ENCODE measurements at regions of chr12 and their contacts with region 1.

Region 1: GRCh38 chr12:111812881-111813741 is 28.9 kb upstream of the MAPKAPK5 start:
- DNase-seq: peak; percentile 89 to 90
- ATAC-seq: peak; percentile 95 to 96
- H3K4me3 ChIP-seq: no peak overlapping the region
- H3K27ac ChIP-seq: no peak overlapping the region
- H3K4me1 ChIP-seq: peaks cover 3% of the 10 kb centered on the region; the same call in 1 of the 3 replicates
- CTCF ChIP-seq: peak; percentile 87
- EP300 ChIP-seq: no peak
- POLR2A ChIP-seq: no peak
- RAD21 ChIP-seq: peak; percentile 85 to 91

Region 2: DNA sequence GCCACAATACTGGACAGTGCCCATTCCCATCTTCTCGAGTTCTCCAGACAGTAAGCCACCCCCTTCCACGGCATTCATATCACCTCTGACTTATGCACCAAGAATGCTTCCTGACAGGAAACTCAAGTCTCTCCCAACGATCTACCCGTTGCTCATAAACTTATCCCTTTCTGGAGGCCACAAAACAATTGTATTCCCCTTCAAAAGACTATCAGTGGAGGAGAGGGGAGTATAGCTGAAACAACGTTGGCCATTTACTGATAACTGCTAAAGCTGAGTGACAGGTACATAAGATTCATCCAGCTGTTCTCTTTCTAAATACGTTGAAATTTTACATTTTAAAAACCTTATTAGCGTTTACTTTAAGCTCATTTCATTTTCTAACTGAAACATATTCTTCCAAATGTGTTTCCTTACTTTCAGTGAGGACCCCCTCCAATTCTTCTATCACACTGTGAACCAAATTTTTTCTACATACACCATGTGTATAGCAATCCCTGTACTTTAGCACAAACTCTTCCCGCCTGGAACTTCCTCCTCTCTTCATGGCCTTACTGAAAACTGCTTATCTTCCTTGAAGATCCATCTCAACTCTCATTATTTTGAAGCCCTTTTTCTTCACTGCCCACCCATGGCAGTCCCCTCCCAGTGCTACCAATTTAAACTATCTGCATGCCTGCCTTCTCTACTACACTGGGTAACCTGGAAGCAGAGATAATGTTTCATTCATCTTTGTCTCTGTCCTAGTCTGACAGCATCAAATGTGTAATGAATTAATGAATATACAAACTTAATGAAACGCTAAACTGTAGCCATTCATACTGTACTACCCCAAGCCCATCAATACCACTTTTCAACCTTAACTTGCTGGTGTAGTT is 242.8 kb before region 1 on chr12:
- CTCF ChIA-PET with region 1: no interaction called
- POLR2A ChIA-PET with region 1: no interaction called
- DNase-seq: peak; percentile 52 to 74
- ATAC-seq: peak; percentile 86 to 92
- H3K4me3 ChIP-seq: no peak overlapping the region
- H3K27ac ChIP-seq: peak overlapping the region; percentile 40 to 62; a peak in 5 of 6 replicates
- H3K4me1 ChIP-seq: peaks cover 44% of the 10 kb centered on the region
- CTCF ChIP-seq: no peak
- EP300 ChIP-seq: no peak
- POLR2A ChIP-seq: no peak
- RAD21 ChIP-seq: no peak

Region 3: DNA sequence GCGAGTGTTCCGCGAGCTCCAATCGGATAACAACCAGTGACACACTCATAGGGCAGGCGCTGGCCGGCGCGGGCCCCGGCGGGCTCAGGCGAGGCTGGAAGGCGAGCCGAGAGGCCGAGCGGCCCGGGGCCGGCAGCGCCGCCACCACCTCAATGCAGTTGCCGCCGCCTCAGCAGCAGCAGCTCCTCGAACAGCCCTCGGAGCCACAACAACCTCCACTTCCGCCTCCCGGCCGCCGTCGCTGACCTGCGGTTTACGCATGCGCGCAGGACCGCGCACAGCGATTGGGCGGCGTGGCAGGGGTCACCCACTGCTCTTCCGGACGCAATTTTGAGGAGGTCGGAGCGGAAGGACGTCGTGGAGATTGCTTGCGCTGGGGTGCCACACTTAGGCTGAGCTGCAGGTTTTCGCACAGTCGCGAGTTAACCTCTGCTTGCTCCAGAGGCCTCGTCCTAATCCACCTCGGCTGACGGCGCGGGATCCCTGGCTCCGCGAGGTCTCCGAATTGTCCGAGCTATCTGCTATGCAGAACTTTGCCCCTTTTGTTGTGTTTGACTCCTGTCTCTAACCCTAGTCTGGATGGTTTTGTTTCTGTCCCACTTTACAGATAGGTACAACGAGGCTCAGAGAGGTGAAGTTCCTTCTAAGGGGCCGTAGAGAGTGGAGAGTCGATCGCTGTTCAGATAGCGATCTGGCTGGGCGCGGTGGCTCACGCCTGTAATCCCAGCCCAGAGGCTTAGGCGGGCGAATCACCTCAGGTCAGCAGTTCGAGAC is 127.2 kb before region 1 on chr12 and contains the starts of genes ACAD10 and BRAP:
- CTCF ChIA-PET with region 1: interaction called, 10 read pairs
- POLR2A ChIA-PET with region 1: interaction called, 7 read pairs
- DNase-seq: peak; percentile 96 to 97
- ATAC-seq: peak; percentile 93 to 96
- H3K4me3 ChIP-seq: peak within 1 kb of the TSS; percentile 89
- H3K27ac ChIP-seq: peak within 1 kb of the TSS; percentile 85 to 90
- H3K4me1 ChIP-seq: peaks cover 21% of the 10 kb centered on the region
- CTCF ChIP-seq: no peak
- EP300 ChIP-seq: no peak
- POLR2A ChIP-seq: peak; percentile 93
- RAD21 ChIP-seq: no peak
- polyA plus RNA-seq, gene ACAD10: 22.0 and 32.6 TPM in 2 replicates
- polyA plus RNA-seq, gene BRAP: 25.2 and 29.7 TPM in 2 replicates

Region 4: GRCh38 chr12:111747333-111747732 is 65.8 kb before region 1 on chr12:
- CTCF ChIA-PET with region 1: interaction called, 150 read pairs
- POLR2A ChIA-PET with region 1: no interaction called
- DNase-seq: no peak
- ATAC-seq: 0 out of 6 replicates have a peak, but pooled peaks of 1 of the 2 experiments have one; percentile 44
- H3K4me3 ChIP-seq: no peak overlapping the region
- H3K27ac ChIP-seq: no peak overlapping the region
- H3K4me1 ChIP-seq: no peaks in the 10 kb centered on the region
- CTCF ChIP-seq: no peak
- EP300 ChIP-seq: no peak
- POLR2A ChIP-seq: no peak
- RAD21 ChIP-seq: no peak

Region 5: GRCh38 chr12:111767362-111768158 is 45.6 kb before region 1 on chr12:
- CTCF ChIA-PET with region 1: interaction called, 150 read pairs
- POLR2A ChIA-PET with region 1: interaction called, 3 read pairs
- DNase-seq: peak; percentile 53 to 67
- ATAC-seq: peak; percentile 74 to 75
- H3K4me3 ChIP-seq: peak overlapping the region; percentile 71
- H3K27ac ChIP-seq: peak overlapping the region; percentile 81 to 95
- H3K4me1 ChIP-seq: peaks cover 26% of the 10 kb centered on the region
- CTCF ChIP-seq: no peak
- EP300 ChIP-seq: no peak
- POLR2A ChIP-seq: no peak
- RAD21 ChIP-seq: no peak

Region 6: DNA sequence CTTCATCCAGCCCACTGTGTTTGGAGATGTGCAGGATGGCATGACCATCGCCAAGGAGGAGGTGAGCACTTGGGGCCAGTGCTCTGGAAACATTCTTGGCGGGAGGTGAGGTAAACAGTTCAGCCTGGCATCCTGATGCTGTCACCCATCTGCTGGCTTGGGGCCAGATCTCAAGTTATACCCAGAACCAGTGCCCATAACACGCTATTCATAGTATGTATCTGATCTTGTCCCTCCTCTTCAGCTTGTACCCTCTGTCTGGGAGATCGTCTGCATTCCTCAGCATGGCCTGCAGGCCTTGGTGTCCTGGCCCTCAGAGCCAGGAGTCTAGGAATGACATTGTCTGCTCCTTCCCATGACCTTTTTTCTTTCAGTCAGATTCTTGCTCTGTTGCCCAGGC is 14.9 kb before region 1 on chr12:
- CTCF ChIA-PET with region 1: interaction called, 25 read pairs
- POLR2A ChIA-PET with region 1: no interaction called
- DNase-seq: no peak
- ATAC-seq: no peak; a peak in 1 of 6 replicates
- H3K4me3 ChIP-seq: no peak overlapping the region
- H3K27ac ChIP-seq: no peak overlapping the region
- H3K4me1 ChIP-seq: no peaks in the 10 kb centered on the region
- CTCF ChIP-seq: no peak
- EP300 ChIP-seq: no peak
- POLR2A ChIP-seq: no peak
- RAD21 ChIP-seq: no peak

Measured in A549 (cell line).